H1 (cell line): ENCODE measurements at regions of chr13 and their contacts with region 1.

Region 1: GRCh38 chr13:79423801-79424642 is 18.0 kb upstream of the RBM26 start:
- DNase-seq: no peak
- H3K4me3 ChIP-seq: no peak overlapping the region
- H3K27ac ChIP-seq: no peak overlapping the region
- H3K4me1 ChIP-seq: no peaks in the 10 kb centered on the region
- H3K27me3 ChIP-seq: no peaks in the 10 kb centered on the region
- CTCF ChIP-seq: peak in 2 of 3 experiments; percentile 46 to 47; a peak in 2 of 4 replicates
- EP300 ChIP-seq: no peak
- POLR2A ChIP-seq: no peak
- RAD21 ChIP-seq: peak; percentile 70 to 74

Region 2: GRCh38 chr13:79413521-79413920 is 10.5 kb before region 1 on chr13:
- CTCF ChIA-PET with region 1: interaction called, 22 read pairs
- POLR2A ChIA-PET with region 1: interaction called, 3 read pairs
- DNase-seq: no peak
- H3K4me3 ChIP-seq: no peak overlapping the region
- H3K27ac ChIP-seq: no peak overlapping the region
- H3K4me1 ChIP-seq: no peaks in the 10 kb centered on the region
- H3K27me3 ChIP-seq: no peaks in the 10 kb centered on the region
- CTCF ChIP-seq: no peak
- EP300 ChIP-seq: no peak
- POLR2A ChIP-seq: no peak
- RAD21 ChIP-seq: no peak

Region 3: DNA sequence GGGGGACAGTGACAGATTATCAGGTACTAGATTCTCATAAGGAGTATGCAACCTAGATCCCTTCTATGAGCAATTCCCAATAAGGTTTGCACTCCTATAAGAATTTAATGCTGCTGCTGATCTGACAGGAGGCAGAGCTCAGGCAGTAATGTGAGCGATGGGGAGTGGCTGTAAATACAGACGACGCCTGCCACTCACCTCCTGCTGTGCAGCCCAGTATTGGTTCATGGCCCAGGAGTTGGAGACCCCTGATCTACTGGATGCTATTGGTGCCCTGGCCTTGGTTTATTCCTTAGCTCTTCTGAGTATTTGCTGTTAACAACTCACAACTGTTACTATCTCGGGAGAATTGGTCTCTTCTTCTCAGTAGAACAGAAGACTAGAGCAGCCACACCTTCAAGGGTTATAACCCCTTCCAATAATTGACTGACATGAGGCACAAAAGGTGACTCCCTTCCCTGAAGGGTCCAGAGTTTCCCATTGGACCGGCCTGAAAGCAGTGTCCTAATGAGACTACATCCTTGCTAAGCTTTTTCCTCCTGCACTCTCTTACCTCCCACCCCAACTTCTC is 17.0 kb after region 1 on chr13:
- CTCF ChIA-PET with region 1: interaction called, 14 read pairs
- POLR2A ChIA-PET with region 1: interaction called, 4 read pairs
- DNase-seq: no peak
- H3K4me3 ChIP-seq: no peak overlapping the region
- H3K27ac ChIP-seq: no peak overlapping the region
- H3K4me1 ChIP-seq: no peaks in the 10 kb centered on the region; a peak in 1 of 7 replicates
- H3K27me3 ChIP-seq: no peaks in the 10 kb centered on the region
- CTCF ChIP-seq: no peak
- EP300 ChIP-seq: no peak
- POLR2A ChIP-seq: no peak
- RAD21 ChIP-seq: no peak

Region 4: GRCh38 chr13:79457390-79457789 is 33.4 kb after region 1 on chr13:
- CTCF ChIA-PET with region 1: interaction called, 19 read pairs
- POLR2A ChIA-PET with region 1: no interaction called
- DNase-seq: no peak
- H3K4me3 ChIP-seq: no peak overlapping the region
- H3K27ac ChIP-seq: no peak overlapping the region
- H3K4me1 ChIP-seq: no peaks in the 10 kb centered on the region
- H3K27me3 ChIP-seq: no peaks in the 10 kb centered on the region
- CTCF ChIP-seq: no peak
- EP300 ChIP-seq: no peak
- POLR2A ChIP-seq: no peak
- RAD21 ChIP-seq: no peak

Region 5: DNA sequence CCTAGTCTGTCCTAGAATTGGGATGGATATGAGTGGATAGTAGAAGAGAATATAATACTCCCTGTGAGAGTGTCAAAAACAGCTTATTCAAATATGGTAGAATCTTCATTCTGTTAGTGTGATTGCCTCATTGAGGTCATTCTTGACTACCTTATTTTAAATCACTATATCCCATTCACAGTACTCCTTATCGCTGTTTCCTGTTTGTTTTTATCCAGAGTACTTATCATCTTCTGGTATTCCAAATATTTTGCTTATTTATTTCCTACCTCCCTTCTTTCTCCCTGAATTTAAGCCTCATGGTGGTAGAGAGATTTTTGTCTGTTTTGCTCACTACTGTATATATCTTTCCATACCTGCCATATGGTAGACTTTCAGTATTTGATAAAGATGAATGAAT is 66.8 kb after region 1 on chr13:
- CTCF ChIA-PET with region 1: interaction called, 11 read pairs
- POLR2A ChIA-PET with region 1: no interaction called
- DNase-seq: no peak
- H3K4me3 ChIP-seq: no peak overlapping the region
- H3K27ac ChIP-seq: no peak overlapping the region
- H3K4me1 ChIP-seq: peaks cover 0 to 9% (median 2%) of the 10 kb centered on the region in 4 experiments; a peak in 2 of 7 replicates
- H3K27me3 ChIP-seq: no peaks in the 10 kb centered on the region
- CTCF ChIP-seq: no peak
- EP300 ChIP-seq: no peak
- POLR2A ChIP-seq: no peak
- RAD21 ChIP-seq: no peak

Region 6: DNA sequence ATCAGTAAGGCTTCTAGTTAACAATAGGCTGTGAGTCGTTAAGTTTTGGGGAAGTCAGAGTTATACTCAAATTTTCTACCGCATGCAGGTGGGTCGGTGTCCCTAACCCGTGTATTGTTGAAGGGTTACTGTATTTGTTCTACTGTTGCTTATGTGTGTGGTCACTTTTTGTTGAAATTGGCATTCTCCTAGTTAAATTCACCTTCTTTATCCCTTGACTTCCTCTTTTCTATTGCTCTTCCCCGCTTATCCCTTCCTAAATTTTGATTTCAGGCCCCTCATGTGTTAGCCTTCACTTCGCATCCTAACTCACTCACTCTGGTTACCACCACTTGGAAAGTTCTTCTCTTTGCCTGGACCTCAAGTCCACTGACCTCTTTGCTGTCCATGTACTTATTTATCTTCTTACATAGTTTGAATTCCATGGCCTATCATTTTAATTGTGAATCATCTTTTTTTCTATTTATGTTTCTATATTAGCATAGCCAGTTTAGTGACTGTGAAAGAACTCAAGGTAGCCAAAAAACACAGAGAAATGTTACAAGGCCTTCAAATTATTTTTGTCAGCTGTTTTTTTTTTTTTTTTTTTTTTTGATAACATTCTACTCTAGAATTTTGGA is 109.9 kb after region 1 on chr13:
- CTCF ChIA-PET with region 1: interaction called, 111 read pairs
- POLR2A ChIA-PET with region 1: no interaction called
- DNase-seq: no peak
- H3K4me3 ChIP-seq: no peak overlapping the region
- H3K27ac ChIP-seq: no peak overlapping the region
- H3K4me1 ChIP-seq: peaks cover 0 to 12% (median 5%) of the 10 kb centered on the region in 4 experiments; a peak in 5 of 7 replicates
- H3K27me3 ChIP-seq: no peaks in the 10 kb centered on the region
- CTCF ChIP-seq: no peak
- EP300 ChIP-seq: no peak
- POLR2A ChIP-seq: no peak
- RAD21 ChIP-seq: no peak